ENCODE measurements at regions of chr2 and their contacts with region 1.

Region 1: GRCh38 chr2:9287400-9288043 is 80.9 kb downstream of the ASAP2 start:
- DNase-seq: peak; percentile 77
- H3K4me3 Mint-ChIP-seq: peak overlapping the region; percentile 51
- H3K27ac Mint-ChIP-seq: peak overlapping the region; percentile 86
- H3K4me1 Mint-ChIP-seq: peaks cover 82% of the 10 kb centered on the region
- H3K27me3 Mint-ChIP-seq: no peaks in the 10 kb centered on the region
- CTCF ChIP-seq: no peak

Region 2: DNA sequence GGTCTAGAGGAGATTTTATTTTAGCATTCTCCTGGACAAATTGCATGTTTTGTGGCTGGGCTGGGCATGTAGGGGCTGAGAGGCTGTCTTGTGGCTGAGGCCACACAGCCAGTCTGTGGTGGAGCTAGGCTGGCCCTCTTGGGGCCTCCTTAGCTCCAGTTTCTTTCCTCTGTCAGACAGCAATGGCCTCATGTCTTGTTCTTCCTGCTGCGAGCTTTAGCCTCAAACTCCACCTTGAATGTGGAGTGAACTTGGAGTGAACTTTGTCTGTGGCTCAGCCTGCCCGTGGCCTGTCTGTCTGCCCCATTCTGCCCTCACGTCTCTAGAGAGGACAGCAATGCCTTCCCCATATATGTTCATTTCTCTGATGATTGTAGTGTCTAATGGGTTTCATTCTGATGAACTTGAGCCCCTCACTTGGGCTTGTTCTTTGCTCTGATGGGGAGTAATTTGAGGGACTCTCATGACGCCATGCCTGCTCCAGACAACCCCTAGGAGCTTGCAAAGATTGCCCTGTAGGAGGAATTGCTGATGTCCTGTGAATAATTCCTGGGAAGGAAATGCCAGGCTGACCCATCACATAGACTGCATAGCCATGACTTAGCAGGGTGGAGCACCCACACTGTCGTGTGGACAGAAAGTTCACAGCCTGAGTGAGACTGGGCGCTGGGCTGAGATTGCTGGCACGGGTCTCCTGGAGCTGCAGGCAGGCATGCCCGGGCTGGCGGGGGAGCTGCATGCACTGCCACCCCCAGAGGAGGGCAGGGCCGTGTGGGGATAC is 38.3 kb before region 1 on chr2:
- CTCF ChIA-PET with region 1: no interaction called
- intact Hi-C with region 1: loop called (anchors 5 kb)
- DNase-seq: peak; percentile 43
- H3K4me3 Mint-ChIP-seq: peak overlapping the region; percentile 66
- H3K27ac Mint-ChIP-seq: peak overlapping the region; percentile 76
- H3K4me1 Mint-ChIP-seq: peaks cover 81% of the 10 kb centered on the region
- H3K27me3 Mint-ChIP-seq: no peaks in the 10 kb centered on the region
- CTCF ChIP-seq: no peak

Region 3: GRCh38 chr2:9333591-9334171 is 46.2 kb after region 1 on chr2:
- CTCF ChIA-PET with region 1: interaction called, 8 read pairs
- intact Hi-C with region 1: loop called (anchors 5 kb)
- DNase-seq: peak; percentile 74
- H3K4me3 Mint-ChIP-seq: no peak overlapping the region
- H3K27ac Mint-ChIP-seq: peak overlapping the region; percentile 76
- H3K4me1 Mint-ChIP-seq: peaks cover 61% of the 10 kb centered on the region
- H3K27me3 Mint-ChIP-seq: no peaks in the 10 kb centered on the region
- CTCF ChIP-seq: peak; percentile 35

Region 4: DNA sequence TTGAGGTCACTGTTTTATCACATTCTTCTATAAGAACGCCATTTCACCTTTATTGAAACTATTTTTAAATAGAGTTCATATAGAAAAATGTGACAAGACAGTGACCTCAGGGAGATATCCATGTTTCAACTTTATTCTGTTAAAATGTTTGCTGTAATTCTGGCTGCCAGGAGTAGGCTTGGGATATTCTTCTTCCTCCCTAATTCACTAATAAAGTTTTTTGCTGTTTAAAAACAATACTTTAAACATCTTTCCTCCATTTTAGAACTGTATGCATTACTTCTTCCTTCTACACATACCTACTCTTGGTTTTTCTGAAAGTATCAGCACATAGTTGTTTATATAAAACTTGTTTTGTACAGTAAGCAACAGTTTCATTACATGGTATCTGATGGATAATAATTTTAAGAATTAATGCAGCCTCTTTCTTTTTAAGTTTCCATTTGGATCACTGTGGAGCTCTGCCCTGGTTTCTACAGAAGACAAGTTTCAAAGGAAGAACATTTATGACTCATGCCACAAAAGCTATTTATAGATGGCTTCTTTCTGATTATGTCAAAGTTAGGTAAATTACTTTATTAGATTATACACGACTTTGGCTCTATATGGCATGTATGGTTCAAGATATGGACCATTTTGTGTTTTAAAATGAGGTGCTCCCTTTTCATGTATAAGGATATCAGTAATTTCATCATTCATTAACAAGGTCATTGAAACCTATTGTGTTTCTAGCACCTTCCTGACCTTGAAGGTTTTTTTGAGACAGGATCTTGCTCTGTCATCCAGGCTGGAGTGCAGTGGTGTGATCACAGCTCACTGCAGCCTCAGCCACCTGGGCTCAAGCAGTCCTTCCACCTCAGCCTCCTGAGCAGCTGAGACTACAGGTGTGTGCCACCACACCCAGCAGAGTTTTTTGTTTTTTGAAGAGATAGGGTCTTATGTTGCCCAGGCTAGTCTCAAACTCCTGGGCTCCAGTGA is 143.1 kb after region 1 on chr2:
- CTCF ChIA-PET with region 1: no interaction called
- intact Hi-C with region 1: no loop called
- DNase-seq: no peak
- H3K4me3 Mint-ChIP-seq: no peak overlapping the region
- H3K27ac Mint-ChIP-seq: no peak overlapping the region
- H3K4me1 Mint-ChIP-seq: no peaks in the 10 kb centered on the region
- H3K27me3 Mint-ChIP-seq: no peaks in the 10 kb centered on the region
- CTCF ChIP-seq: no peak

Measured in Calu3 (cell line).